Caco-2 (cell line): ENCODE measurements at regions of chr2 and their contacts with region 1.

Region 1: DNA sequence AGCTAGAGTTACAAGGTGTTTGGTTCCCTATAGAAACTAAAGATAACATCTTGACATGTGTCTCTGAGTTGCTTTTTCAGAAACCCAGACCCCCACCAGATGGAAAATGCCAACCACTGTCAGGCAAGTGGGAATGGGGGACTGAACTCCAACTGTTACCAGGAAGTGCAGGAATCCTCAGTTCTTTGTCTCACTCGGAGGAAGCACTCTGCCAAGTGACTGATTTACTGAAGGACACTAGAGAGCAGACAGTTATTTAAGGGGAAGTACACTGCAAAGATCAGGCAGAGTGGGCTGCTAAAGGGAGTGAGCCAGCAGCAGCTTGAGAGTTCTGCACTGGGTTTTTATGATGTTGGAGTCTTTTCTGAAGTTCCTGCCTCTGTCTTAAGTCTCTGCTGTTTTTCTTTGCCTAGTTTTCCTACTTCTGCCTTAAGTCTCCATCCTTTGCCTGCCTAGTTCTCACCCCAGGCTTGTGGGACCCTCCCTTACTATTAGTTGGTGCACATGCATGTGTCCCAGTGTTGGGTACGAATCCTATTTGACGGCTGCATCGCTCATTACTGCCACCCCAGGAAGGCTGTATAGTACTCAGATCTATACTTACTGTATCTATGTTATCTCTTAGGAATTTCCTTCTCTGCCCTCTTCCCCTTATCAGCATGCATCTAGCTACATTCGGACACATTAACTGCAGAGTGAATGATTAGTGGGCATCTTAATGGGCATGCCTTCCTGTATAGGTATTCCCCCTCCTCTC is 97.1 kb downstream of the TEX51 start:
- DNase-seq: peak in 1 of 2 experiments; percentile 64
- H3K4me3 ChIP-seq: no peak overlapping the region
- H3K4me3 Mint-ChIP-seq: peak overlapping the region; percentile 53
- H3K27ac Mint-ChIP-seq: peak overlapping the region; percentile 74
- H3K4me1 ChIP-seq: peaks cover 45% of the 10 kb centered on the region
- H3K4me1 Mint-ChIP-seq: peaks cover 33% of the 10 kb centered on the region
- H3K27me3 ChIP-seq: no peaks in the 10 kb centered on the region
- H3K27me3 Mint-ChIP-seq: no peaks in the 10 kb centered on the region
- CTCF ChIP-seq: no peak

Region 2: GRCh38 chr2:126050991-126051736 is 944.6 kb before region 1 on chr2:
- CTCF ChIA-PET with region 1: no interaction called
- POLR2A ChIA-PET with region 1: no interaction called
- intact Hi-C with region 1: loop called (anchors 5 kb)
- DNase-seq: no peak
- H3K4me3 ChIP-seq: no peak overlapping the region
- H3K4me3 Mint-ChIP-seq: no peak overlapping the region
- H3K27ac Mint-ChIP-seq: peak overlapping the region; percentile 49
- H3K4me1 ChIP-seq: peaks cover 37% of the 10 kb centered on the region
- H3K4me1 Mint-ChIP-seq: peaks cover 14% of the 10 kb centered on the region
- H3K27me3 ChIP-seq: no peaks in the 10 kb centered on the region
- H3K27me3 Mint-ChIP-seq: no peaks in the 10 kb centered on the region
- CTCF ChIP-seq: no peak

Region 3: GRCh38 chr2:126302043-126302442 is 693.8 kb before region 1 on chr2:
- CTCF ChIA-PET with region 1: no interaction called
- POLR2A ChIA-PET with region 1: no interaction called
- intact Hi-C with region 1: loop called (anchors 5 kb)
- DNase-seq: no peak
- H3K4me3 ChIP-seq: no peak overlapping the region
- H3K4me3 Mint-ChIP-seq: no peak overlapping the region
- H3K27ac Mint-ChIP-seq: peak overlapping the region; percentile 0
- H3K4me1 ChIP-seq: peaks cover 27% of the 10 kb centered on the region
- H3K4me1 Mint-ChIP-seq: peaks cover 11% of the 10 kb centered on the region
- H3K27me3 ChIP-seq: no peaks in the 10 kb centered on the region
- H3K27me3 Mint-ChIP-seq: no peaks in the 10 kb centered on the region
- CTCF ChIP-seq: no peak

Region 4: DNA sequence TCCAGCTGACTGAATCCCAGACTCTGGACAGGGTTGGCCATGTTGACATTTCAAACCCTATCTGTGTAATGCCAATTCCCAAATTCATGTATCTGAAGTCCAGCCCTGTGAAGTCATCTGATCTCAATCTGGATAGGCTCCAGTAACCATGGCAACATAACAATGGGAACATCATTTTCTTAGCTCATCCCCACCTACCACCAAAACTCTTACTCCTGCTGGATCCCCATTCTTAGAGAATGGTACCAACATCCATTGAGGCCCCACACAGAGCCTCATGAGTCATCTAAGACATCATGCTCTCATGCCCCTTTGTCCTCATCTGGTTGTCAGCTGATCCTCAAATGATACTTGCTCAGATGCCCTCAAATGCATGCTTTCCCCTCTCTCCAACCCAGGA is 156.0 kb before region 1 on chr2:
- CTCF ChIA-PET with region 1: no interaction called
- POLR2A ChIA-PET with region 1: no interaction called
- intact Hi-C with region 1: no loop called
- DNase-seq: no peak
- H3K4me3 ChIP-seq: no peak overlapping the region
- H3K4me3 Mint-ChIP-seq: no peak overlapping the region
- H3K27ac Mint-ChIP-seq: no peak overlapping the region
- H3K4me1 ChIP-seq: no peaks in the 10 kb centered on the region
- H3K4me1 Mint-ChIP-seq: no peaks in the 10 kb centered on the region
- H3K27me3 ChIP-seq: no peaks in the 10 kb centered on the region
- H3K27me3 Mint-ChIP-seq: peaks cover 17% of the 10 kb centered on the region
- CTCF ChIP-seq: no peak

Region 5: GRCh38 chr2:127025359-127026166 is 29.8 kb after region 1 on chr2:
- CTCF ChIA-PET with region 1: no interaction called
- POLR2A ChIA-PET with region 1: no interaction called
- intact Hi-C with region 1: loop called (anchors 1 kb)
- DNase-seq: peak; percentile 72 to 79
- H3K4me3 ChIP-seq: peak overlapping the region; percentile 25
- H3K4me3 Mint-ChIP-seq: peak overlapping the region; percentile 75
- H3K27ac Mint-ChIP-seq: no peak overlapping the region
- H3K4me1 ChIP-seq: no peaks in the 10 kb centered on the region
- H3K4me1 Mint-ChIP-seq: no peaks in the 10 kb centered on the region
- H3K27me3 ChIP-seq: no peaks in the 10 kb centered on the region
- H3K27me3 Mint-ChIP-seq: no peaks in the 10 kb centered on the region
- CTCF ChIP-seq: peak; percentile 0 to 19

Region 6: DNA sequence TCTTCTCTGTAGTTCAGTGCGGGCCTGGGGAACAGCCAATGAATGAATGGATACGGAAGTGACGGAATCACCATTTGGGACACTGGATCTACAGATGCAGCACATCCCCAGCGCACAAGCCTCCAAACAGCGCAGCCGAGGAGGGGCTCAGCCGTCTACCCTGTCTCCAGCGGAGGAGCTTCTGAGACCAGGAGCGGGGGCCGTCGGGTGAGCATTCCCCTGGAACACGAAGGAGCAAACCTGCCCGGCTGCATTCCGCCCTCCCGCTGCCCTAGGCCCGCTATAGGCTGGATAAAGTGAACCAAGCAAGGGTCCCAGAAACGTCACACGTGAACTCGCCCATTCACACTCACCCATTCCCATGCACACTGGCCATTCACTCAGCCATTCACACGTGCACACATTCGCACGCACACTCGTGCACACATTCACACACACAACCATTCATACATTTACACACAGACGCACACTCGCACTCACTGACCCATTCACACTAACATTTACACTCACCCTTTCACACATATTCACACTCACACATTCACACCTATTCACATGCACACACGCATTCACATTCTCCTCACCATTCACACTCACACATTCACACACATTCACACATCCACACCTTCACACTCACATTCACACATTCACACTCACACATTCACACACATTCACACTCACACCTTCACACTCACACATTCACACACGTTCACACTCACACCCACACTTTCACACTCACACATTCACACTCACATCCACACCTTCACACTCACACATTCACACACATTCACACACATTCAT is 47.8 kb after region 1 on chr2:
- CTCF ChIA-PET with region 1: no interaction called
- POLR2A ChIA-PET with region 1: no interaction called
- intact Hi-C with region 1: loop called (anchors 2 kb)
- DNase-seq: peak; percentile 68 to 75
- H3K4me3 ChIP-seq: no peak overlapping the region
- H3K4me3 Mint-ChIP-seq: no peak overlapping the region
- H3K27ac Mint-ChIP-seq: no peak overlapping the region
- H3K4me1 ChIP-seq: peaks cover 10% of the 10 kb centered on the region
- H3K4me1 Mint-ChIP-seq: peaks cover 7% of the 10 kb centered on the region
- H3K27me3 ChIP-seq: no peaks in the 10 kb centered on the region
- H3K27me3 Mint-ChIP-seq: no peaks in the 10 kb centered on the region
- CTCF ChIP-seq: no peak

Region 7: DNA sequence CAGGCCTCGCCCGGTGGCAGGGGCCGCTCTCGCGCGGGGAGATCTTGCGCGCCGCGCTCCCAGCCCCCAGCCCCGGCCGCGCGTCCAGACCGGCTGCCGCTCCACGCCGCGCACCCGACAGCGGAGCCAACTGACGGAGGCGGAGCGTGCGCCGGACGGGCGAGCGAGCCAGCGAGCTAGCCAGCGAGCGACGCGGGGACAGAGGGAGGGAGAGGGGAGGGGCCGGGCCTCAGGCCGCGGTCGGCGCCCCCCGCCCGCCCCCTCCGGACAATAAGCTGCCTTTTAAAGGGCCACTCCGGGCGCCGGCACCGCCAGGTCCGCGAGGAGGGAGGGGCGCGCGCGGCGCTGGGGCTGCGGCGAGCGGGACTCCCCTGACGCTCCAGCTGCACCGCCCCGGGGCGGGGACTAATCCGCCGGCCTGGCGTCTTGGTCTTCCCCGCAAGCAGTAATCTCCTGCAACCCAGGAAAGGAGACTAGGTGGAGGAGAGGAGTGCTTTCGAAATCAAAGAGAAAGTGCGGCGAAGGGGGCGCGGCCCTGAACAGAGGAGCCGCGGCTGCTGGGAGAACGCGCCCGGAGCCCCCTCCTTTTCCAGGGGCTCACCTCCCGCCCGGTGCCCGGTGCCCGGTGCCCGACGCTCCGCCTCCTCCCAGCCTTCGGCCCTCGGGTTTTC is 111.3 kb after region 1 on chr2 and contains the start of gene BIN1:
- CTCF ChIA-PET with region 1: no interaction called
- POLR2A ChIA-PET with region 1: interaction called, 4 read pairs
- intact Hi-C with region 1: loop called (anchors 2 kb)
- DNase-seq: peak; percentile 97 to 98
- H3K4me3 ChIP-seq: peak within 1 kb of the TSS; percentile 98
- H3K4me3 Mint-ChIP-seq: peak within 1 kb of the TSS; percentile 85
- H3K27ac Mint-ChIP-seq: peak within 1 kb of the TSS; percentile 84
- H3K4me1 ChIP-seq: peaks cover 47% of the 10 kb centered on the region
- H3K4me1 Mint-ChIP-seq: peaks cover 39% of the 10 kb centered on the region
- H3K27me3 ChIP-seq: no peaks in the 10 kb centered on the region
- H3K27me3 Mint-ChIP-seq: no peaks in the 10 kb centered on the region
- CTCF ChIP-seq: no peak
- total RNA-seq, gene BIN1: 198 and 205 TPM in 2 replicates

Region 8: GRCh38 chr2:127115471-127116065 is 119.8 kb after region 1 on chr2:
- CTCF ChIA-PET with region 1: interaction called, 4 read pairs
- POLR2A ChIA-PET with region 1: interaction called, 3 read pairs
- intact Hi-C with region 1: loop called (anchors 2 kb)
- DNase-seq: peak; percentile 89 to 95
- H3K4me3 ChIP-seq: peak overlapping the region; percentile 29; the same call in 1 of the 2 replicates
- H3K4me3 Mint-ChIP-seq: peak overlapping the region; percentile 65
- H3K27ac Mint-ChIP-seq: peak overlapping the region; percentile 60
- H3K4me1 ChIP-seq: peaks cover 54% of the 10 kb centered on the region
- H3K4me1 Mint-ChIP-seq: peaks cover 32% of the 10 kb centered on the region
- H3K27me3 ChIP-seq: no peaks in the 10 kb centered on the region
- H3K27me3 Mint-ChIP-seq: no peaks in the 10 kb centered on the region
- CTCF ChIP-seq: no peak